ENCODE measurements at regions of chr6 and their contacts with region 1.

Region 1: GRCh38 chr6:83067448-83068413 is at the start of gene DOP1A:
- DNase-seq: peak; percentile 98
- H3K4me3 ChIP-seq: peak within 1 kb of the TSS; percentile 71 to 94 (median 89)
- H3K27ac ChIP-seq: peak within 1 kb of the TSS; percentile 92 to 95 (median 94)
- H3K4me1 ChIP-seq: peaks cover 37 to 69% (median 56%) of the 10 kb centered on the region in 4 donors
- H3K27me3 ChIP-seq: no peaks in the 10 kb centered on the region
- CTCF ChIP-seq: peak in 2 of 3 experiments; percentile 96 to 98
- EP300 ChIP-seq: no peak
- POLR2A ChIP-seq: no peak
- total RNA-seq, gene DOP1A: 33.2 to 46.9 (median 34.1) TPM

Region 2: GRCh38 chr6:83119742-83120300 is 52.1 kb after region 1 on chr6:
- intact Hi-C with region 1: loop called (anchors 2 kb)
- DNase-seq: no peak
- H3K4me3 ChIP-seq: no peak overlapping the region
- H3K27ac ChIP-seq: no peak overlapping the region
- H3K4me1 ChIP-seq: no peaks in the 10 kb centered on the region
- H3K27me3 ChIP-seq: no peaks in the 10 kb centered on the region
- CTCF ChIP-seq: no peak
- EP300 ChIP-seq: no peak
- POLR2A ChIP-seq: no peak

Region 3: DNA sequence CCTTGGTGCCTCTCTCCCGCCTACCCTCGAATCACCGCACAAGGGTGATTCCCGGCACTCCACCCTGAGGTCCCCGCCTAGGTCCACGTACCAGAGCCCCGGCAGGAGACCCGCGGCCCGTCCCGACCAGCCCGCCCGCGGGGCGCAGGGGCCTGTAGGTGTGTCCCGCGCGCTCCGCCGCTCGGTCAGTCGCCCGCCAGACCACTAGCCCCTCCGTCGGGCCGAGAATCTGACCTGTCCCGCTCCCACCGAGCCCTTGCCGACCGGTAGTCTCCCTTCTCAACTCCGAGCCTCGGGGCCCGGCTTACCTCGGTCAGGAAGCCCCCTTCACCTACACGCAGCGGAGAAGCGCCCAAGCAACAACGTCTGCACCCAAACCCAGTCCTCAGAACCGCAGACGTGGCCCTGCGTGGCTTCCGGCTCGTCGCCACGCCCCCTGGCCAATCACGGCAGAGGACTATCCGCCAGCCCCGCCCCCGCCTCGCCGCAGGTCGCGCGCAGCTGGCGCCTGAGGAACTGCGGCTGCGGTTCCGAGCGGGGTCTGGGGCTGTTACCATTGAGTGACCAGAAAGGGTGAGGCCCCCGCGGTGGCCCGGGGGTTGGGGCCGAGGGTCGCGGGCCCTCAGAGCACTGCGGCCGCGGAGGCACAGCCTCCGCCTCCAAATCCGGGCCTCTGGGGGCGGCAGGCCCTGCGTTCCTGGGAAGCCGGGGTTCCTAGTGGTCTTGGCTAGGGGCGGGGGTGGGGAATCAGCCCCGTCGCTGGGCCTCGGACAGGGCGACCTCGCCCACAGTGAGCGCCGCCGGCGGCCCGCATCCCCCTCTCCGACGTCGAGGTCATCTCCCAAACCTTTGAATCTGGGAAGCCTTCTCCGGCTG is 125.4 kb after region 1 on chr6 and contains the starts of genes PGM3 and RWDD2A:
- intact Hi-C with region 1: loop called (anchors 10 kb)
- DNase-seq: peak; percentile 96
- H3K4me3 ChIP-seq: peak within 1 kb of the TSS; percentile 94 to 100 (median 97)
- H3K27ac ChIP-seq: peak within 1 kb of the TSS; percentile 86 to 91 (median 90)
- H3K4me1 ChIP-seq: peaks cover 8 to 36% (median 33%) of the 10 kb centered on the region in 4 donors
- H3K27me3 ChIP-seq: no peaks in the 10 kb centered on the region
- CTCF ChIP-seq: peak in 1 of 3 experiments; percentile 29
- EP300 ChIP-seq: no peak
- POLR2A ChIP-seq: peak; percentile 74
- total RNA-seq, gene PGM3: 7.1 to 15.4 (median 8.9) TPM
- total RNA-seq, gene RWDD2A: 2.5 to 4.5 (median 3.1) TPM

Region 4: DNA sequence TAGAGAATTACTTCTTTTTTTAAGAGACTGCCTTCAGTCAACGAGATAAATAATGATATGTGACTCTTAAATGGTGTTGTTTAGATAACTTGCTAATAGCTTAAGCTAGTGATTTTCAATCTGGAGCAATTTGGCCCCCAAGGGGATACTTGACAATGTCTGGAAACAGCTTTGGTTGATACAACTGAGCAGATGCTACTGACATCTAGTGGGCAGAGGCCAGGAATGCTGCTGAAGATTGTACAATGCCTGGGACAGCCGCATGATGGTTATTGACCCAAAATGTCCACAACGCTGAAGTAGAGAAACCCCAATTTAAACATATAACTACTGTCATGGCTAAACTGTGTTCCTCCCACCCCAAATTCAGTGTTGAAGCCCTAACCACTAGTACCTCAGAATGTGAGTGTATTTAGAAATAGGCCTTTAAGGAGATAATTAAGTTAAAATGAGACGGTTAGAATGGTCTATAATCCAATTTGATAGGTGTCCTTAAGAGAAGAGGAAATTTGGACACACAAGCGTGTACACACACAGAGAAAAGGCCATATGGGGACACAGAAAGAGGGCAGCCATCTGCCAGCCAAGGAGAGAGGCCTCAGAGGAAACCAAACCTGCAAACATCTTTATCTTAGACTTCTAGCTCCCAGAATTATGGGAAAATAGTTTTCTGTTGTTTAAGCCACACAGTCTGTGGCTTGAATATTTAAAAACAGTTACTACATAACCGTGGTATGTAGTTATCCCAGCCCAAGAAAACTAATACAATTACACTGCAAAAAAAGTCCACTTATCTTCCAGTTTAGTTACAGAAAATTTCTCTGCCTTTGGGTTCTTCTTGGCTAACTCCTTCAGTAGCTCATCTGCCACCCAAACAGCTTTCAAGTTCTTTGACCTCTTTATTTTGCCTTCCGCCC is 147.7 kb after region 1 on chr6:
- intact Hi-C with region 1: loop called (anchors 5 kb)
- DNase-seq: no peak
- H3K4me3 ChIP-seq: no peak overlapping the region
- H3K27ac ChIP-seq: no peak overlapping the region
- H3K4me1 ChIP-seq: no peaks in the 10 kb centered on the region
- H3K27me3 ChIP-seq: no peaks in the 10 kb centered on the region
- CTCF ChIP-seq: peak; percentile 69 to 84 (median 75)
- EP300 ChIP-seq: no peak
- POLR2A ChIP-seq: no peak

Region 5: DNA sequence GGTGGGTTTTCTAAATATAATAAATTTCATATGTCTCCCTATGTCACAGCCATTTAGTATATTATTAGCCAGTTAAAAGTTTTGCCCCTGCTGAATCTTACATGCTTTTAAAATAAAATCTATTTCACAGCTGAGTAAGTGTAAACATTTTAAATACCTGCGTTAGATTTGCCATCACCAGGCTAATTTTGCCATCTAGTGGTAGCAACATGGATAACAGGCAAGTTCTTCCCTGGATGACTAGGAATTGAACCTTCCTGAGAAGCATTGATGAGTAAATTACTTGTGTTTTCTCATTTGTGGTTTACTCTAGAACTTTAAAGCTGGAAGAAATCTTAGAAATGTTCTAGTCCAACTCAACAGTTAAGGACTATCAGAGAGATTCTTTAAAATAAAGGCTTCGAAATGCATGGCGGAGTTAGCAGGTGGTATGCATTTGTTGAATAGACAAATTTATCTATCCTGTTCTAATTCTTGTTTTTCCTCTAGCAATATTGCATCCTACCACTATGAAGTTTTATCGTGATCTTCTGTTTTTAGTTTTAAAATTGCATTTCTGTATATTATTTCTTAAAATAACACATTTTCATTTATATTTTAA is 447.2 kb after region 1 on chr6:
- intact Hi-C with region 1: loop called (anchors 5 kb)
- DNase-seq: no peak
- H3K4me3 ChIP-seq: no peak overlapping the region
- H3K27ac ChIP-seq: no peak overlapping the region
- H3K4me1 ChIP-seq: peaks cover 0 to 20% (median 17%) of the 10 kb centered on the region in 4 donors
- H3K27me3 ChIP-seq: no peaks in the 10 kb centered on the region
- CTCF ChIP-seq: peak; percentile 77 to 82 (median 81)
- EP300 ChIP-seq: no peak
- POLR2A ChIP-seq: no peak

Measured in esophagus muscularis mucosa (tissue), 4 donors.